Activated naive CD4-positive, alpha-beta T cell treated with anti-CD3 and anti-CD28 coated beads, Interleukin-2, amount 10 ng/mL, durations not matched to agents 7 days and 5 days (primary cell): ENCODE measurements at regions of chr11 and their contacts with region 1.

Region 1: DNA sequence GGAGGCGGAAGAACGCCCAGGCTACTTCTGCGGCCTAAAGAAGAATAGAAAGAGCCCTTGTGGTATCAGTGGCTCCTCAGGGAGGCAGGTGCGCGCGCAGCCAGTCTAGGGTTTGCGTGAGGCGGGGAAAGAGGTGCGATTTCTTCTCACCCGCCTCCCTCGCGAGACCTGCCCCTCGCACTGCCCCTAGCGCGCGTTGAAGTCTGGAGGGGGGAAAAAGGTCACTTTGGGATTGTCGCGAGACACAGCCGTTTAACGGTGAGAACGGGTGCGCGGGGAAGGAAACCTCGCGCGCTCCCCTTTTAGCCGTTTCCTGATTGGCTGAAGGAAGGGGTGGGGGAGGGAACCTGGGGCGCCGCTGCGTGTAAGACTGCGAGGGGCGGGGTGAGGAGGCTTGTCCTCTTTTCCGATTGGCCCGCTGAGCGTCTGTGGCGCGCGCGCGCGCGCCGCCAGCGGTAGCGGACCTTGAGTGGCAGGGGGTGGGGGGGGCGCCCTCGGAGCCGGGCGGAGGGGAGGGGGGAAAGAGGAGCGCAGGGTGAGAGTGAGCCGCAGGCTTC is at the start of gene ZFP91:
- DNase-seq: peak; percentile 97
- H3K4me3 Mint-ChIP-seq: peak within 1 kb of the TSS; percentile 86
- H3K27ac Mint-ChIP-seq: peak within 1 kb of the TSS; percentile 100
- H3K4me1 Mint-ChIP-seq: peaks cover 66% of the 10 kb centered on the region
- H3K27me3 Mint-ChIP-seq: peaks cover 4% of the 10 kb centered on the region

Region 2: DNA sequence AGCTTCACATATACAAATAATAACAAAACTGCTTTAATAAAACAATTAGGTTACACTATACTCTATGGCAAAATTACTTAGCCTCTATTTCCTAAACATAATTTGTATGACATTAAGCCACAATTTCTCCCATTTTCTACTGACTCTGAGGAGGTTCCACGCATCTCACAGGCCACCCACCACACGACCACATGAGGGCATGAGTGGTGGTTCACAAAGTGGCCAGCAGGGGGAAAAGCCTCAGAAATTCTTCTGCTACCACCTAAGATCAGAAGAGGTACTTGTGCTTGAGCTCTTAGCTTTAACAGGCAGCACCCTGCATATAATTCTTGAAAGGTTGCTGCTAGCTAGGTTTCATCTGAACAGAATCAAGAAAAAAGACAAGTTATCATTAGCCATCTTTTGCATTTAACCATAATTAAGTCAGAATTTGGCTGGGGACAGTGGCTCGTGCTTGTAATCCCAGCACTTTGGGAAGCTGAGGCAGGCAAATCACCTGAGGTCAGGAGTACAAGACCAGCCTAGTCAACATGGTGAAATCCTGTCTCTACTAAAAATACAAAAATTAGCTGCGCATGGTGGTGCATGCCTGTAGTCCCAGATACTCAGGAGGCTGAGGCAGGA is 10.7 kb before region 1 on chr11:
- CTCF ChIA-PET with region 1: interaction called, 22 read pairs
- DNase-seq: peak; percentile 84
- H3K4me3 Mint-ChIP-seq: no peak overlapping the region
- H3K27ac Mint-ChIP-seq: peak overlapping the region; percentile 62
- H3K4me1 Mint-ChIP-seq: peaks cover 59% of the 10 kb centered on the region
- H3K27me3 Mint-ChIP-seq: no peaks in the 10 kb centered on the region

Region 3: DNA sequence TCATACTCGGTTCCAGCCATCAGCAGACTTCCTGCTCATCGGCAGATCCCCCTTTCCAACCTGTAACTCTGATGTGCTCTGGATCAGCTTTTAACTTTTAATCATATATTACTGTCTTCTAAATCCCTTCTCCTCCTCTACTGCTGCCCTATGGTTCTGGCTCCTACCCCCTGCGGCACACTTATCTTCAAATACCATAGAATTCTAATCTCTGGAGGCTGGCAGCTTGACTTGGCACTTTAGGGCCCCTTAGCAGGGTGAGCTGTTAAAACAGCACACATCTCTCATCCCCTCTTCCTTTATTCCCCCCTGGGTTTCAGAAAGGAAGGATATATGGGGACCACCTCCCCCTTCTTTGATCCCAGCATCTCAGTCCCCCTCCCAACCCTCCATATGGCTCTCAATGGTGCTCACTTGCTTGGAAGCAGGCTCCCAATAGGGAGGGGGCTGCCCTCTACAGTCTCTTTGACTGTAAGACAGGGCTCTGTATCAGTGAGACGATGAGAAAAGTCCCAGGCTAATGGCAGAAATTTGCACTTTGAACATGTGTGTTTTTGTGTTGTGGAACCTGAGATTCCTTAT is 39.4 kb after region 1 on chr11:
- CTCF ChIA-PET with region 1: interaction called, 24 read pairs
- DNase-seq: no peak
- H3K4me3 Mint-ChIP-seq: no peak overlapping the region
- H3K27ac Mint-ChIP-seq: no peak overlapping the region
- H3K4me1 Mint-ChIP-seq: peaks cover 11% of the 10 kb centered on the region
- H3K27me3 Mint-ChIP-seq: no peaks in the 10 kb centered on the region

Region 4: DNA sequence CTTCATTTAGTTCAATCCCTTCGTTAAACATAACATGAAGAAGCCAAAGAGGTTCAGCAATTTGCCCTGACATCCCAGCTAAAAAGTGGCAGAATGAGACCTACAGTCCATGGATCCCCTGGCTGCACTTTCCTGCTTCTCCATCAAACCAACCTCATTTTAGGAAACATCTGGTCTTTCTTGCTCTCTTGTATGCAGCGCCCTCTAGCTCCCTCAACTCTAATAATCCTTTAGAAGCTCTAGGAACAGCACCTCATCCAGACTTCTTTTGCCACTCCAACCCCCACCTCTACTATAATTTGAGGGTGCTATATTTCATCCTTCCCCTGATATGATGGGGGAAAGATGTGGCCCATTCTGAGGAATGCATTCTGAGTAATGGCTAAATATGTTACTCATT is 51.1 kb after region 1 on chr11:
- CTCF ChIA-PET with region 1: interaction called, 23 read pairs
- DNase-seq: peak; percentile 26
- H3K4me3 Mint-ChIP-seq: no peak overlapping the region
- H3K27ac Mint-ChIP-seq: no peak overlapping the region
- H3K4me1 Mint-ChIP-seq: no peaks in the 10 kb centered on the region
- H3K27me3 Mint-ChIP-seq: no peaks in the 10 kb centered on the region

Region 5: DNA sequence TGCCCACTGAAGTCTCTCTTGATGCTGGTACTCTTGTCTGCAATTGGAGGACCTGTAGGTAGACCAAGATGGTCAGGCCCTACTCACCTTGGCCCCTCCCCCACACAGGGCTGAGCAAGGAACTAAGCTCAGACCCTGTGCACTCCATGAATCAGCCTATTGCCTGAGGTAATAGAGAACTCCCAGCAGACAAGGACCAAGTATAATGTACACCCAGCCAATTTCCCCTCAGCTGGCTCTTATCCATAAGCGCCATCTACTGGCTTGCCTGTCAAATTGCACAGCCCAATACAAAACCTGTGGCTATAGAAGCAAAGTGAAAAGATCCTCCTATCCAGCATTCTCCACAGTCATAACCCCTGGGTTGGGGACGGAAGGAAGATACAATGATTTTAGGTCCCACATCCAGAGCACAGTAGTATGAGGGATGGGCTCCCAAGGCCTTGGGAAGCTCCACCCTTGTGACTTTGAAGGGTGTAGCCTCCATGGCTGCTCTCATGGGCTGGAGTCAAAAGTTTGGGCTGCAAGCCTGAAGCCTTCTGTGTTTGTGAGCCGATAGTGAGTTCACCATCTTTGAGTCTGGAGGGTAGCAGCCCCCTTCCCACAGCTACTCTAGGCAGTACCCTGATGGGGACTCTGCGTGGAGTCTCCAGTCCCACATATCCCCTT is 209.8 kb after region 1 on chr11:
- CTCF ChIA-PET with region 1: interaction called, 15 read pairs
- DNase-seq: peak; percentile 53
- H3K4me3 Mint-ChIP-seq: no peak overlapping the region
- H3K27ac Mint-ChIP-seq: no peak overlapping the region
- H3K4me1 Mint-ChIP-seq: no peaks in the 10 kb centered on the region
- H3K27me3 Mint-ChIP-seq: no peaks in the 10 kb centered on the region